Left colon (tissue), 2 donors: ENCODE measurements at regions of chr3 and their contacts with region 1.

Region 1: GRCh38 chr3:47475570-47476329 is at the start of gene SCAP:
- DNase-seq: peak; percentile 94 to 96
- ATAC-seq: peak; percentile 98
- total RNA-seq, gene SCAP: 118 to 123 TPM

Region 2: GRCh38 chr3:47420511-47421484 is 55.0 kb before region 1 on chr3:
- intact Hi-C with region 1: loop called (anchors 5 to 10 kb)
- DNase-seq: peak; percentile 76 to 94
- ATAC-seq: peak; percentile 69